ENCODE measurements at regions of chr11 and their contacts with region 1.

Region 1: DNA sequence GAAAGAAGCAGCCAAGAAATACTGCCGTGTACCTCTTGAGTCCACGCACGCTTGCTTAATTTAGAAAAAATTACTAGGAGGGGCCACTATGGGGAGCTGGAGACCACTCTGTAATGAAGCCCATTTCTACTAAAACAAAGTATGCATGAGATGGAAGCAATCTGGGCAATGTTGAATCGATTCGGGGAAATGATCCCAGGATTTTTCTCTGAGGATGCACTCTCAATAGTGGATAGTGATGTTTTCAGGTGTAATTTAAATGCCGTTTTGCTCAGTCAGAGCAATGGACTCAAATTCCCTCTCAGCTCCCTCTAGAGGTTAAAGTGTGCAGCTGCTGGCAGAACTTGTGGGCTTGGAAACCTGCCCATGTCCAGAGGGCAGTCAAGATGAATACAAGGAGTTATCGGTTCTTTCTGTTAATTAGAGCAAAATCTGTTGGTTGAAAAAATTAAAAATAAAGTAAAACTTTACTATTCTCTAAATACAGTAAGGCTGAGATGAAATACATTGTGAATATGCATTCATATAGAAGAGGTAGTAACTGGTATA is 64.1 kb downstream of the ME3 start:
- DNase-seq: peak in 4 of 10 donors; percentile 37 to 60 (median 50)
- H3K4me3 ChIP-seq: peak overlapping the region in 8 of 59 donors; percentile 9 to 44 (median 19)
- H3K27ac ChIP-seq: peak overlapping the region in 1 of 59 donors; percentile 51
- H3K27me3 ChIP-seq: no peaks in the 10 kb centered on the region
- CTCF ChIP-seq: peak in 55 of 56 donors; percentile 60 to 94 (median 82)

Region 2: GRCh38 chr11:86274503-86274902 is 333.8 kb before region 1 on chr11:
- intact Hi-C with region 1: no loop called
- DNase-seq: no peak
- H3K4me3 ChIP-seq: no peak overlapping the region
- H3K27ac ChIP-seq: no peak overlapping the region
- H3K27me3 ChIP-seq: no peaks in the 10 kb centered on the region
- CTCF ChIP-seq: peak in 1 of 56 donors; percentile 10

Region 3: GRCh38 chr11:86408845-86409244 is 199.5 kb before region 1 on chr11:
- intact Hi-C with region 1: no loop called
- DNase-seq: no peak
- H3K4me3 ChIP-seq: no peak overlapping the region
- H3K27ac ChIP-seq: no peak overlapping the region
- H3K27me3 ChIP-seq: no peaks in the 10 kb centered on the region
- CTCF ChIP-seq: peak in 2 of 56 donors; percentile 11 to 16

Region 4: DNA sequence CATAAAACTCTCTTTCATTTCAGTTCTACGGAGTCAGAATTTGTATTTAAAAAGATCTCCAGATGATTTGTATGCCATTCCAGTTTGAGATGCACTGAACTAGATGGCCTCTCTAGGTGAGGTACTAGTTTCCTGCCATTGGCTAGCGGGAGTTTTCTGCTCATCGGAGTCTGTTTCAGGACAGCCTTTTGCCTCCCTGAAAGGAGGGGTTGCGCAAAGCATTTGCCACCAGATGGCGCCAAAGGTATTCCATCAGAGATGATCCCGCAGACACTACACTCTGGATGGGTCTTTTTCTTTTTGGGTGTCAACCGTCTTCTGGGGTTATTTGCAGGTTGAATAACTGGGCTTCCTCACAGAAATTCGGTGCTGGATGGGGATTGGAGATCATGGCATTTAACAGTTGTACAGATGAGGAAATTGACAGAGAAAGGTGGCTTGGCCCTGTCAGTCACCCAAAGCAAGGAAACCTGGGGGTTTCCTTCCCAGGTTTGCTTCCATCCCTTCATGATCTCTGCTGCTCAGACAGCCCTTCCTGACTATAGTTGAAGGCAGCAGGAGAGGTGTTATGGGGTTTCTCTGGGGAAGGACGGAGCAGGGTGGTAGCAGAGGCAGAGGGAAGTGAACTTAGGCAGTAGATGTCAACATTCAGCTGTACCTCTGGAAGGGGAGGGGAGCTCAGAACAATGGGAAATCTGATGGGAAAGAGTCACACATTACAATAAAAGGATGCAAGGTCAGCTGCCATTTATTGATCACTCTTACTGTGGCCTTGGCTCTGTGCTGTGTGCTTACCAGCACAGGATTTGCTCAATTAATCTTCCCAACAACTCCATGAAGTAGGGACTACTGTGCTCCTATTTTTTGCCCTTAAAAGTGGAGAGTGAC is 152.0 kb before region 1 on chr11:
- intact Hi-C with region 1: loop called (anchors 10 kb)
- DNase-seq: peak; percentile 69 to 92 (median 84)
- H3K4me3 ChIP-seq: peak overlapping the region in 1 of 59 donors; percentile 10
- H3K27ac ChIP-seq: no peak overlapping the region
- H3K27me3 ChIP-seq: no peaks in the 10 kb centered on the region
- CTCF ChIP-seq: peak; percentile 83 to 98 (median 93)

Region 5: GRCh38 chr11:86802601-86803051 is 194.3 kb after region 1 on chr11:
- intact Hi-C with region 1: loop called in 1 of 2 experiments (anchors 10 kb)
- DNase-seq: no peak
- H3K4me3 ChIP-seq: peak overlapping the region in 27 of 59 donors; percentile 1 to 79 (median 67)
- H3K27ac ChIP-seq: peak overlapping the region in 1 of 59 donors; percentile 25
- H3K27me3 ChIP-seq: peaks cover 0 to 34% (median 0%) of the 10 kb centered on the region in 45 donors
- CTCF ChIP-seq: peak; percentile 18 to 64 (median 47)

Region 6: GRCh38 chr11:86818466-86819192 is 210.3 kb after region 1 on chr11:
- intact Hi-C with region 1: loop called in 1 of 2 experiments (anchors 5 kb)
- DNase-seq: peak in 1 of 10 donors; percentile 7
- H3K4me3 ChIP-seq: peak overlapping the region in 2 of 59 donors; percentile 1 to 2
- H3K27ac ChIP-seq: no peak overlapping the region
- H3K27me3 ChIP-seq: peaks cover 0 to 13% (median 0%) of the 10 kb centered on the region in 45 donors
- CTCF ChIP-seq: peak; percentile 79 to 96 (median 90)